ENCODE measurements at regions of chr3 and their contacts with region 1.

Region 1: GRCh38 chr3:12719984-12720898 is 38.8 kb downstream of the TMEM40 start:
- DNase-seq: peak; percentile 69 to 80
- H3K4me3 ChIP-seq: no peak overlapping the region
- H3K27ac ChIP-seq: no peak overlapping the region
- H3K4me1 ChIP-seq: peaks cover 3% of the 10 kb centered on the region; the same call in 1 of the 2 replicates
- H3K27me3 ChIP-seq: no peaks in the 10 kb centered on the region
- CTCF ChIP-seq: peak; percentile 94

Region 2: GRCh38 chr3:12405432-12406272 is 314.6 kb before region 1 on chr3:
- CTCF ChIA-PET with region 1: no interaction called
- POLR2A ChIA-PET with region 1: no interaction called
- intact Hi-C with region 1: no loop called
- DNase-seq: peak; percentile 92 to 97
- H3K4me3 ChIP-seq: peak overlapping the region; percentile 20; the same call in 1 of the 2 replicates
- H3K27ac ChIP-seq: peak overlapping the region; percentile 96
- H3K4me1 ChIP-seq: peaks cover 51% of the 10 kb centered on the region
- H3K27me3 ChIP-seq: no peaks in the 10 kb centered on the region
- CTCF ChIP-seq: no peak

Region 3: DNA sequence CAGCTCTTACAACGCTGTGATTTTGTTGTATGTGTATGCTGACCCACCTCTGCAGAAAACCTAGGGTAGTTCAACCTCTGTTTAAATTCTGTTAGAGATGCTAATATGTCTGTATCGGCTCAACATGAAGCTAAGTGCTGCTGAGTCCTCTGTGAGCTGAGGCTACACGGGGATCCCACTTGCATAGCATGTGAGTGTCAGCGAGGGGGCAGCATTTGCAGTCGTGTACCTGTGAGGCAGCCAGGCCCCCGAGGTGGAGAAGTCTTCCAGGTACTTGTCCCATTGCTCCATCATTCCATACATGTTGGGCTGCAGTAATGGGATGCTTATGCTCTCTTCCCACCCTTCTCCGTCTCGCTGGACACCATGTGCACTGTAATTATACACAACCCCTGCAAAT is 178.6 kb before region 1 on chr3:
- CTCF ChIA-PET with region 1: no interaction called
- POLR2A ChIA-PET with region 1: interaction called, 11 read pairs
- intact Hi-C with region 1: no loop called
- DNase-seq: no peak
- H3K4me3 ChIP-seq: no peak overlapping the region
- H3K27ac ChIP-seq: no peak overlapping the region
- H3K4me1 ChIP-seq: peaks cover 22% of the 10 kb centered on the region
- H3K27me3 ChIP-seq: no peaks in the 10 kb centered on the region
- CTCF ChIP-seq: no peak

Region 4: GRCh38 chr3:12601072-12601471 is 119.2 kb before region 1 on chr3:
- CTCF ChIA-PET with region 1: no interaction called
- POLR2A ChIA-PET with region 1: no interaction called
- intact Hi-C with region 1: no loop called
- DNase-seq: no peak
- H3K4me3 ChIP-seq: no peak overlapping the region
- H3K27ac ChIP-seq: no peak overlapping the region
- H3K4me1 ChIP-seq: no peaks in the 10 kb centered on the region
- H3K27me3 ChIP-seq: no peaks in the 10 kb centered on the region
- CTCF ChIP-seq: no peak

Region 5: DNA sequence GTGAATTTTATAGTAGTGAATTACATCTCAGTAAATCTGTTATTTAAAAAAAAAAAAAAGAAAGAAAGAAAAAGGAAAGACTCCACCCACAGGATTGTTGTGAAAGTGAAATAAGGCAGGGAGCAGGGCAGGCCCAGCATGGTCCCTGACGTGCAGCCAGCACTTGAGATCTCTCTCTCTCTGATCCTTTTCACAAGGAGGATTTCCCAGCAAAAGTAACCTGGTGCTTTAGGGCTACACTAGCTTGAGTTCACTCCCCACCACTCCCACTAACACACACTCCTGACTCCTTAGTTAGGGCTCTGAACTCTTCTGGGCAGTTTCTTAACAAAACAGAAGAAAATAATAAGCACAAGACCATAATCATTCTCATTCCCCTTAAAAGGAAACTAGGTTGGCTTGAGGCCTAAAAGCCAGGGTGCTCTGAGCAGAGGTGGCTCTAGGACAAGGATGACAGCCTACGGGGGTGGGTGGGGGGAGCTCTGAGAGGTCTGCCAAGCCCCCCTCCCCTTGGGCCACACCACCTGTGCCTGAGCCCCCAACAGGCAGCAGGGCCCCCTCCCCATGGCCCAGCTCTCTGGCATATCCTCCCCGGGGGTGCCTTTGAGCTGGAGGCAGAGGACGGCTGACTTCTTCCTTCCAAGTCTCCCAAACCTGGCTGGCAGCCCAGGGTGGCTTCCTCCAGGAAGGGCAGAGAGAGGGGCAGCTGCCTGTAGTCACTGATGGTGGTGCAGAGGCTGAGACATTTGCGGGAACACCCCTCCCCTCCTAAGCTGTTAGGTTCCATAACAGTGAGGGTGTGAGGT is 38.0 kb after region 1 on chr3:
- CTCF ChIA-PET with region 1: no interaction called
- POLR2A ChIA-PET with region 1: no interaction called
- intact Hi-C with region 1: loop called (anchors 2 kb)
- DNase-seq: peak; percentile 44 to 47
- H3K4me3 ChIP-seq: peak overlapping the region; percentile 42; the same call in 1 of the 2 replicates
- H3K27ac ChIP-seq: peak overlapping the region; percentile 91
- H3K4me1 ChIP-seq: peaks cover 62% of the 10 kb centered on the region
- H3K27me3 ChIP-seq: no peaks in the 10 kb centered on the region
- CTCF ChIP-seq: no peak

Region 6: GRCh38 chr3:12984023-12984823 is 264.0 kb after region 1 on chr3:
- CTCF ChIA-PET with region 1: interaction called, 11 read pairs
- POLR2A ChIA-PET with region 1: no interaction called
- intact Hi-C with region 1: no loop called
- DNase-seq: peak; percentile 42 to 55
- H3K4me3 ChIP-seq: no peak overlapping the region
- H3K27ac ChIP-seq: no peak overlapping the region
- H3K4me1 ChIP-seq: peaks cover 9% of the 10 kb centered on the region
- H3K27me3 ChIP-seq: no peaks in the 10 kb centered on the region
- CTCF ChIP-seq: peak; percentile 78

Measured in PC-9 (cell line).